GM12878 (cell line): ENCODE measurements at regions of chr6 and their contacts with region 1.

Region 1: GRCh38 chr6:24933868-24934401 is 1.8 kb downstream of the RIPOR2 start:
- DNase-seq: no peak
- ATAC-seq: peak; percentile 14; the same call in 1 of the 3 replicates
- H3K4me3 ChIP-seq: peak overlapping the region; percentile 74
- H3K27ac ChIP-seq: peak overlapping the region; percentile 75
- H3K4me1 ChIP-seq: peaks cover 55% of the 10 kb centered on the region
- H3K27me3 ChIP-seq: no peaks in the 10 kb centered on the region
- CTCF ChIP-seq: peak; percentile 78 to 95 (median 83)
- EP300 ChIP-seq: no peak
- POLR2A ChIP-seq: no peak
- RAD21 ChIP-seq: peak; percentile 57; the same call in 1 of the 2 replicates

Region 2: DNA sequence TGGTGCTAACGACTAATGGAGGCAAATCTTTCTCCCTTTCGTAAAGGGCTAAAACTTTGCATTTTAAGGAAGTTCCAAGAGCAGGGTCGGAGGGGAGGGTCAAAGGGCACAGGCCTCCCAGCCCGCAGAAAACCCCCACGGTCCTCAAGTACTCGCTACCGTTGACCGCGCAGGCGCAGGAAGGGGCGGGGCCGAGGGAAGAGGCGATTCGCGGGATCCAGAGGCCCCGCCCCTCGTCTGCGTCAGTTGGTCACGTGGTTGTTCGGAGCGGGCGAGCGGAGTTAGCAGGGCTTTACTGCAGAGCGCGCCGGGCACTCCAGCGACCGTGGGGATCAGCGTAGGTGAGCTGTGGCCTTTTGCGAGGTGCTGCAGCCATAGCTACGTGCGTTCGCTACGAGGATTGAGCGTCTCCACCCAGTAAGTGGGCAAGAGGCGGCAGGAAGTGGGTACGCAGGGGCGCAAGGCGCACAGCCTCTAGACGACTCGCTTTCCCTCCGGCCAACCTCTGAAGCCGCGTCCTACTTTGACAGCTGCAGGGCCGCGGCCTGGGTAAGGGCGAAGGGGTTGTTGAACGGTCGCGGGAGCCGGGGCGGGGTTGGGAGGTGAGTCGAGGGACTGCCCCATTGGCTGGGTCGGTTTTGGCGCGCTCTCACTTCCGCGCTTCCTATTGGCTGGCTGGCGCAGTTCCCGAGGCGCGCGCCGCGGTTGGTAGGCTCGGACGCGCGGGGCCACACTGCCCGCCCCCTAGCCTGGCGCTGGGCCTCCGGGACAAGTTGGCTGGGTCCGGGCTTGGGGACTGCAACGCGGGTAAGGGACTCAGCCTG is 159.0 kb before region 1 on chr6 and contains the start of gene GMNN:
- CTCF ChIA-PET with region 1: interaction called, 5 read pairs
- POLR2A ChIA-PET with region 1: interaction called, 6 read pairs
- RAD21 ChIA-PET with region 1: interaction called, 5 read pairs
- SMC1A ChIA-PET with region 1: interaction called, 14 read pairs
- in situ Hi-C with region 1: no loop called
- intact Hi-C with region 1: loop called (anchors 5 kb)
- DNase-seq: peak; percentile 78
- ATAC-seq: peak; percentile 94
- H3K4me3 ChIP-seq: peak within 1 kb of the TSS; percentile 79
- H3K27ac ChIP-seq: peak within 1 kb of the TSS; percentile 87
- H3K4me1 ChIP-seq: peaks cover 3% of the 10 kb centered on the region; the same call in 1 of the 2 replicates
- H3K27me3 ChIP-seq: no peaks in the 10 kb centered on the region
- CTCF ChIP-seq: no peak
- EP300 ChIP-seq: no peak
- POLR2A ChIP-seq: peak; percentile 96
- RAD21 ChIP-seq: no peak
- polyA plus RNA-seq, gene GMNN: 146 to 153 TPM

Region 3: DNA sequence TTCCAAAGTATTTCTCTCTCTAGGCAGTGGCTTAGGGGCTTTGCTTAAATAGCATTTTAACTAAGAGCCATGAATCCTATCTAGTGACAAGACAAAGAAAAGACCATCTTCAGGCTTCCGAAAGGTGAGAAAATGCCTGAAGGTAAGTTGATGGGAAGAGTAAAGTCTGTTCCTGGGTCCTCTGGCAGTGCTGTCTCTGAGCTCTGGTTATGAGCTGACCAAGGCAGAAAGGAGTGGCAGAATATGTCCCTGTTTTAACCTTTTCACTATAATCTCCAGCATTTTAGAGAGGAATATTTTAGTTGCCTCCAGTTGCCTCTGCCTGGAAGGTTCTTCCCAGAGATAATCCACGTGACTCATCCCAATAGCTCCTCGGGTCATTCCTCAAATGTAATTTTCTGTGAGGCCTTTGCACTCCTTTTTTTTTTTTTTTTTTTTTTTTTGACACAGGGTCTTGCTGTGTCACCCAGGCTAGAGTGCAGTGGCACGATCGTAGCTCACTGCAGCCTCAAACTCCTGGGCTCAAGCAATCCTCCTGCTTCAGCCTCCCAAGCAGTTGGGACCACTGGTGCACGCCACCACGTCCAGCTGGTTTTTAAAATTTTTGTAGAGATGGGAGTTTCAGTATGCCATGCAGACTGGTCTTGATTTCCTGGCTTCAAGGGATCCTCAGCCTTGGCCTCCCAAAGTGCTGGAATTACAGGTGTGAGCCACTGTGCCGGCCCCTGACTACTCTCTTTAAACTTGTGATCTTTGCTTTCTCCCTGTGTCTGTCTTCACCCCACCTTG is 131.5 kb before region 1 on chr6:
- CTCF ChIA-PET with region 1: no interaction called
- POLR2A ChIA-PET with region 1: no interaction called
- RAD21 ChIA-PET with region 1: no interaction called
- SMC1A ChIA-PET with region 1: no interaction called
- in situ Hi-C with region 1: no loop called
- intact Hi-C with region 1: no loop called
- DNase-seq: no peak
- ATAC-seq: no peak
- H3K4me3 ChIP-seq: no peak overlapping the region
- H3K27ac ChIP-seq: no peak overlapping the region
- H3K4me1 ChIP-seq: no peaks in the 10 kb centered on the region
- H3K27me3 ChIP-seq: no peaks in the 10 kb centered on the region
- CTCF ChIP-seq: no peak
- EP300 ChIP-seq: no peak
- POLR2A ChIP-seq: no peak
- RAD21 ChIP-seq: no peak

Region 4: DNA sequence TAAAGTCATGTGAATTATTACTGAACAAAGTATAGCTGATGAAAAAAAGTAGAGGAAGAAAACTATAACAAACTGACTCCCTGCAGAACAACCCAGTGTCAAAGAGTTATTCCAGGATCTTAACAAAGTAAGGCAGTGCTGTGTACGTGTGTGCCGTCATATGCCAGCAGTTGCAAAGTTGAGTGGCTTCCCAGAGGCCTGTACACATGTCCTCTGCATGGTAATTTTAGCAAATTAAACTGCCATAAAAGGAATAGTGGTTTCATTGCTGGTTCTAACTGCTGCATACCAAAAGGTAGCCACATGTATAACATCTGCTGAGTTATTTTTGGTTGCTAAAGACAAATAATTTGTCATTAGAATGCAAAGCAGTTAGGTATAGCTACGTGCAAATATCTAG is 42.9 kb before region 1 on chr6:
- CTCF ChIA-PET with region 1: interaction called, 84 read pairs
- POLR2A ChIA-PET with region 1: no interaction called
- RAD21 ChIA-PET with region 1: interaction called, 7 read pairs
- SMC1A ChIA-PET with region 1: interaction called, 47 read pairs
- in situ Hi-C with region 1: no loop called
- intact Hi-C with region 1: no loop called
- DNase-seq: no peak
- ATAC-seq: no peak
- H3K4me3 ChIP-seq: no peak overlapping the region
- H3K27ac ChIP-seq: no peak overlapping the region
- H3K4me1 ChIP-seq: peaks cover 15% of the 10 kb centered on the region
- H3K27me3 ChIP-seq: no peaks in the 10 kb centered on the region
- CTCF ChIP-seq: no peak
- EP300 ChIP-seq: no peak
- POLR2A ChIP-seq: no peak
- RAD21 ChIP-seq: no peak

Region 5: GRCh38 chr6:24949020-24949569 is 15.2 kb after region 1 on chr6:
- CTCF ChIA-PET with region 1: interaction called, 123 read pairs
- POLR2A ChIA-PET with region 1: interaction called, 22 read pairs
- RAD21 ChIA-PET with region 1: interaction called, 123 read pairs
- SMC1A ChIA-PET with region 1: interaction called, 132 read pairs
- in situ Hi-C with region 1: no loop called
- intact Hi-C with region 1: loop called (anchors 1 kb)
- DNase-seq: peak; percentile 96
- ATAC-seq: peak; percentile 96
- H3K4me3 ChIP-seq: peak overlapping the region; percentile 28; the same call in 1 of the 2 replicates
- H3K27ac ChIP-seq: peak overlapping the region; percentile 84
- H3K4me1 ChIP-seq: peaks cover 46% of the 10 kb centered on the region
- H3K27me3 ChIP-seq: no peaks in the 10 kb centered on the region
- CTCF ChIP-seq: no peak
- EP300 ChIP-seq: peak; percentile 78 to 85; a peak in 2 of 4 replicates
- POLR2A ChIP-seq: no peak
- RAD21 ChIP-seq: peak; percentile 9; the same call in 1 of the 2 replicates

Region 6: GRCh38 chr6:24980507-24981387 is 46.8 kb after region 1 on chr6:
- CTCF ChIA-PET with region 1: interaction called, 376 read pairs
- POLR2A ChIA-PET with region 1: interaction called, 9 read pairs
- RAD21 ChIA-PET with region 1: interaction called, 12 read pairs
- SMC1A ChIA-PET with region 1: interaction called, 54 read pairs
- in situ Hi-C with region 1: no loop called
- intact Hi-C with region 1: no loop called
- DNase-seq: no peak
- ATAC-seq: no peak
- H3K4me3 ChIP-seq: no peak overlapping the region
- H3K27ac ChIP-seq: no peak overlapping the region
- H3K4me1 ChIP-seq: no peaks in the 10 kb centered on the region
- H3K27me3 ChIP-seq: no peaks in the 10 kb centered on the region
- CTCF ChIP-seq: no peak
- EP300 ChIP-seq: no peak
- POLR2A ChIP-seq: no peak
- RAD21 ChIP-seq: no peak

Region 7: DNA sequence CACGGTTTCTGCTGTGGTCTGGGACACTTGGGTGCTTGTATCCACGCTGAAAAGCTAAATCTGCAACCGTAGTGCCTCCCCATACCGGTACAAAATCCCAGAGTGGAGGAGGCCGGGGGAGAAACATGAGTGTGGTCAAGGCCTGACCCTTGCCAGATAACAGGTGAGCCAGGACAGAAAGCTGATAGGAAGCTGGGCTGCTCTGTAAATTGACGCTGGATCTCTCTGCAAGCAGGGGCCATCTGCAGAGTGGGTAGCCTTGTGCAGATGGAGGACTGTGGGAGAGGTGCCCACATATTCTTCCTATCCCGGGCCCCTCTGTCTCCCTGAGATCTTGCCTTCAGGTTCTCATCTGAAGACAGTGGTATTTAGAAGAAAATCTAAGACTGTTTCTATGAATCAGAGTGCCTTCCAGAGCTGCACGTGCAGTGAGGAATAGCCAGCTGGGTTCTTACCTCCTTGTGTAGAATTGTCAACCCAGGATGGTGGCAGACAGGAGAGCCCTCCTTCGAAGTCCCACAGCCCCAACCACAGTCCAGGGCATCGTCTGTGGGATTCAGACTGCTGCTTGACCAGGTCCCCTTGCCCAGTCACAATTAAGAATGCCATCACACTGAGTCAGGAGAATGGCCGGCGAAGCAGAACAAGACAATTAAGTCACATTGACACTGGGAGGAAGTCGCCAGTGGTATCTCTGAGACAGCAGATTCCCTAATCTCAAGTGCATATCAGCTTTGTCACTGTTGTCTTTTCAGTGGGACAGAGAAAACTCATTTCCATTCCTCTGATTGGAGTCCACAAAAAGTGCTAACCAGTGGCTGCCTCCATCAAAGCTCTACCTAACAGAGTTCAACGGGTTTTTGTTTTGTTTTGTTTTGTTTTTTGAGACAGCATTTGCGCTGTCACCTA is 101.8 kb after region 1 on chr6:
- CTCF ChIA-PET with region 1: interaction called, 11 read pairs
- POLR2A ChIA-PET with region 1: interaction called, 3 read pairs
- RAD21 ChIA-PET with region 1: interaction called, 9 read pairs
- SMC1A ChIA-PET with region 1: interaction called, 9 read pairs
- in situ Hi-C with region 1: no loop called
- intact Hi-C with region 1: no loop called
- DNase-seq: no peak
- ATAC-seq: peak; percentile 71
- H3K4me3 ChIP-seq: peak overlapping the region; percentile 52; the same call in 1 of the 2 replicates
- H3K27ac ChIP-seq: peak overlapping the region; percentile 80
- H3K4me1 ChIP-seq: peaks cover 19% of the 10 kb centered on the region
- H3K27me3 ChIP-seq: no peaks in the 10 kb centered on the region
- CTCF ChIP-seq: no peak
- EP300 ChIP-seq: no peak
- POLR2A ChIP-seq: no peak
- RAD21 ChIP-seq: no peak

Region 8: DNA sequence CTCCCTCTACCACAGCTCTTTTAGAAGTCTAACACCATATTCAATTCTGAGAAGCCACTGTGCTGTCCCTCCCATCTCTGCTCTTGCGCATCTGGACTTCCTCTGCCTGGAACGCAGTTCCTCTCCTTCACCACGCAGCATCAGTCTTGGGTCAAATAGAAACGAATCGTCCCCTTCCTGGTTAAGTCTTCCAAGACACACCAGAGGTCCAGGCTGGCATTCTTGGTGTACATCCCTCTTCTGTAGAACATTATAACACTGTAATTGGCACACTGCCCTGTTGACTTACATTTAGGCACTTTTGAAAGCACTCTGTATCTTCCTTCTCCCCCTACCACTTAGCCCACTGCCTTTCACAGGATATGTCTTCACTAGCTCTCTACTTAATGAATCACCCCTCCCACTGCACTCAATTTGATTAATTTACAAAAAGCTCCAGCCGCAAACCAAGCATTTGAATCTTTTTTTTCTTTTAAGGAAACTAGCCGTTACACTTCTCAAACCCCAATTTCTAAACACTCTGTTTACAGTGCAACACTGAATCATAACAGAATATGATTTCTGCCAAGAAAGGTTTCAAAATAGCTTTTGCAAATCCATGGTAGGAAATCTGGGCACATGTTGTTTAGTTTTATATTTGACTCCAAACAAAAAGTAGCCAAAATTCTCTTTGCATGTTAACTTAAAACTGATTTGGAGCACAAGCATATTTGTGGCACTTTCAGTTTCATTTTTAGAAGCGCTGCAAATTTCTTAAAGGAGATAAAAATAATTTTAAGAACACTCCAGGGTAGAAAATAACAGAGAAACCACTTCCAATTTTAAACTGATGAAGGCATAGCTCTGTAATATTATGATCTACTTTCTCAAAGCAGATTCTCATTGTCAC is 204.5 kb after region 1 on chr6:
- CTCF ChIA-PET with region 1: no interaction called
- POLR2A ChIA-PET with region 1: no interaction called
- RAD21 ChIA-PET with region 1: no interaction called
- SMC1A ChIA-PET with region 1: interaction called, 3 read pairs
- in situ Hi-C with region 1: no loop called
- intact Hi-C with region 1: loop called (anchors 10 kb)
- DNase-seq: peak; percentile 81
- ATAC-seq: peak; percentile 95
- H3K4me3 ChIP-seq: peak overlapping the region; percentile 74
- H3K27ac ChIP-seq: peak overlapping the region; percentile 98
- H3K4me1 ChIP-seq: peaks cover 7% of the 10 kb centered on the region
- H3K27me3 ChIP-seq: no peaks in the 10 kb centered on the region
- CTCF ChIP-seq: peak; percentile 6 to 39 (median 25); a peak in 2 of 6 replicates
- EP300 ChIP-seq: peak; percentile 24 to 32; a peak in 1 of 4 replicates
- POLR2A ChIP-seq: peak; percentile 80
- RAD21 ChIP-seq: peak; percentile 46